Lower leg skin (tissue), 4 donors: ENCODE measurements at regions of chr10 and their contacts with region 1.

Region 1: GRCh38 chr10:98832738-98833137 is 386.0 kb upstream of the HPS1 start:
- DNase-seq: no peak
- H3K4me3 ChIP-seq: no peak overlapping the region
- CTCF ChIP-seq: no peak
- POLR2A ChIP-seq: no peak

Region 2: GRCh38 chr10:99358101-99358500 is 525.4 kb after region 1 on chr10:
- intact Hi-C with region 1: no loop called
- DNase-seq: no peak
- H3K4me3 ChIP-seq: no peak overlapping the region
- CTCF ChIP-seq: no peak
- POLR2A ChIP-seq: no peak

Region 3: DNA sequence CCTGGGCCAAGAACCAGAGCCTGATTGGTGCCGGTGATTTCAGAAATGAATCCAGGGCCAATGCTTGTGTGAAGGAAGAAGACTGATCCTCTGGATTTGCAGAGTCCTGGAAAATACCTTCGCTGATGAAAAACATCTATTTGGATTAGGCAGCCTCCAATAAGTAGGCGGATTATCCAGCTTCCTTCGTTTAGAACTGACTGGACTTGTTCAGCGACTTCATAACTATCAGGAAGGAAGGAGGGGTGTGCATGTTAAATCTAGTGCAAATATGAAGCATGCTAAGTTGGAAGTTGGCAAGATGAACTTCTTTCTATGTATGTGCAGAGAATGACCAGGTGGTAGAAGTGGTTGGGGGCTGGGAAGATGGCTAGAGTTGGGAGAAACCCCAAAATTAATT is 741.1 kb after region 1 on chr10:
- intact Hi-C with region 1: loop called (anchors 5 kb)
- DNase-seq: no peak
- H3K4me3 ChIP-seq: no peak overlapping the region
- CTCF ChIP-seq: no peak
- POLR2A ChIP-seq: no peak